HCT116 (cell line): ENCODE measurements at regions of chrX and their contacts with region 1.

Region 1: DNA sequence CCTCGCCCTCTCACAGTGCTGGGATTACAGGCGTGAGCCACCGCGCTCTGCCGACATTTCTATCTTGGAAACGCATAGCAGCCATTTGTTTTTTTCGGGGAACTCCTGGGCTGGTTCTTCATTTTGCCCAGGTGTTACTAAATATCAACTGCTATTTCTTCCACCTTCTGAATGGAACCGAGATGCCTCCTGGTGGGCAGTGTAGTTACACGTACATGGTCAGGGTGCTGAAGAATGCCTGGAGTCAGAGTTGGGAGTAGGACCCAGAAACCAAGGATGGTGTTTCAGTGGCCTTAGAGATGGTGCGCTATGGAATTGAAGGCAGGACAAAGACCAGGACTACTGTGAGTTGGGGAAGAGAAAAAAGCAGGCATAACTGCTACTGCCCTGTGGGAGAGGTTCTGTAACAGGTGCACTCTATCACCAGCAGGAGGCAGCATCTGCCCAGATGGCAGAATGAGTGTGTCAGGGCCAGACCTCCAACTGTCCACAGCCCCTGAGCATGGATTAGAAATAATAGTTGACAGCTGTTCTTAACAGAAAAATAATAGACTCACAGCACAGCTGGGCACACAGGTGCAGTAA is 81.7 kb downstream of the ZC4H2 start:
- DNase-seq: peak; percentile 12
- ATAC-seq: peak; percentile 83
- H3K4me3 ChIP-seq: no peak overlapping the region
- H3K27ac ChIP-seq: no peak overlapping the region
- H3K4me1 ChIP-seq: no peaks in the 10 kb centered on the region
- H3K27me3 ChIP-seq: no peaks in the 10 kb centered on the region
- CTCF ChIP-seq: peak; percentile 66 to 73 (median 69)
- POLR2A ChIP-seq: no peak
- RAD21 ChIP-seq: peak; percentile 72

Region 2: GRCh38 chrX:63930140-63930539 is 964.4 kb before region 1 on chrX:
- CTCF ChIA-PET with region 1: no interaction called
- POLR2A ChIA-PET with region 1: no interaction called
- RAD21 ChIA-PET with region 1: no interaction called
- intact Hi-C with region 1: loop called (anchors 2 kb)
- DNase-seq: peak; percentile 10
- ATAC-seq: peak; percentile 73
- H3K4me3 ChIP-seq: no peak overlapping the region
- H3K27ac ChIP-seq: no peak overlapping the region
- H3K4me1 ChIP-seq: no peaks in the 10 kb centered on the region
- H3K27me3 ChIP-seq: no peaks in the 10 kb centered on the region
- CTCF ChIP-seq: peak; percentile 29 to 58 (median 53); a peak in 5 of 6 replicates
- POLR2A ChIP-seq: no peak
- RAD21 ChIP-seq: peak; percentile 52

Region 3: DNA sequence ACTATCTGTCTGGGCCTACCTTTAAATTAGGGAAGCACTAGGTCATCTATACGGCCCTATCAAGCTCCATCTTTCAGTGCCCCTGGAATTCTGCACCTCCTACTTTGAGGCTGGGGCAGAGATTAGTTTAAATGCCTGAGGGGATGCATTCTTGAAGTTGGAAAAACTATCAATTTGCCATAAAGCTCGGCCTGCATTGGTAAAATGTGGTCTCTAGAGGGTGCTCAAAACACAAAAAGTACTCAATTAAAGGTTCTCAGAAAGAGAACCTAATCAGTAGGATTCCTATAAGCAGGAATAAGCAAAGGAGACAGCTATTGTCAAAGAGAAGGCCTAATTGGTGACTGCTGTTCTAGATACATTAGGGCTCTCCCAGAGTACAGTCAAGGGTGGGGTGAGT is 800.8 kb before region 1 on chrX:
- CTCF ChIA-PET with region 1: no interaction called
- POLR2A ChIA-PET with region 1: no interaction called
- RAD21 ChIA-PET with region 1: no interaction called
- intact Hi-C with region 1: loop called (anchors 10 kb)
- DNase-seq: no peak
- ATAC-seq: peak; percentile 47; the same call in 1 of the 2 replicates
- H3K4me3 ChIP-seq: no peak overlapping the region
- H3K27ac ChIP-seq: no peak overlapping the region
- H3K4me1 ChIP-seq: no peaks in the 10 kb centered on the region
- H3K27me3 ChIP-seq: no peaks in the 10 kb centered on the region
- CTCF ChIP-seq: peak in 2 of 3 experiments; percentile 31 to 43; a peak in 3 of 6 replicates
- POLR2A ChIP-seq: no peak
- RAD21 ChIP-seq: peak; percentile 44

Region 4: GRCh38 chrX:64698317-64698716 is 196.2 kb before region 1 on chrX:
- CTCF ChIA-PET with region 1: no interaction called
- POLR2A ChIA-PET with region 1: no interaction called
- RAD21 ChIA-PET with region 1: no interaction called
- intact Hi-C with region 1: no loop called
- DNase-seq: no peak
- ATAC-seq: no peak
- H3K4me3 ChIP-seq: no peak overlapping the region
- H3K27ac ChIP-seq: no peak overlapping the region
- H3K4me1 ChIP-seq: no peaks in the 10 kb centered on the region
- H3K27me3 ChIP-seq: no peaks in the 10 kb centered on the region
- CTCF ChIP-seq: no peak
- POLR2A ChIP-seq: no peak
- RAD21 ChIP-seq: no peak

Region 5: GRCh38 chrX:65451663-65452062 is 557.1 kb after region 1 on chrX:
- CTCF ChIA-PET with region 1: no interaction called
- POLR2A ChIA-PET with region 1: no interaction called
- RAD21 ChIA-PET with region 1: no interaction called
- intact Hi-C with region 1: loop called (anchors 1 kb)
- DNase-seq: peak; percentile 6
- ATAC-seq: no peak
- H3K4me3 ChIP-seq: no peak overlapping the region
- H3K27ac ChIP-seq: no peak overlapping the region
- H3K4me1 ChIP-seq: no peaks in the 10 kb centered on the region
- H3K27me3 ChIP-seq: no peaks in the 10 kb centered on the region
- CTCF ChIP-seq: peak; percentile 24 to 52 (median 49); a peak in 4 of 6 replicates
- POLR2A ChIP-seq: no peak
- RAD21 ChIP-seq: peak; percentile 45

Region 6: GRCh38 chrX:65528705-65529340 is 634.3 kb after region 1 on chrX:
- CTCF ChIA-PET with region 1: no interaction called
- POLR2A ChIA-PET with region 1: no interaction called
- RAD21 ChIA-PET with region 1: no interaction called
- intact Hi-C with region 1: loop called (anchors 5 kb)
- DNase-seq: no peak
- ATAC-seq: peak; percentile 83
- H3K4me3 ChIP-seq: no peak overlapping the region
- H3K27ac ChIP-seq: no peak overlapping the region
- H3K4me1 ChIP-seq: peaks cover 3 to 8% of the 10 kb centered on the region in 2 experiments; a peak in 2 of 4 replicates
- H3K27me3 ChIP-seq: no peaks in the 10 kb centered on the region
- CTCF ChIP-seq: peak; percentile 30 to 92 (median 89); a peak in 5 of 6 replicates
- POLR2A ChIP-seq: no peak
- RAD21 ChIP-seq: peak; percentile 36; the same call in 1 of the 2 replicates